HEK293 (cell line): ENCODE measurements at regions of chr1 and their contacts with region 1.

Region 1: GRCh38 chr1:153946622-153947241 is at the start of gene DENND4B:
- H3K4me3 ChIP-seq: peak within 1 kb of the TSS; percentile 74
- H3K27ac ChIP-seq: peak within 1 kb of the TSS; percentile 91
- H3K4me1 ChIP-seq: no peaks in the 10 kb centered on the region
- CTCF ChIP-seq: peak; percentile 92

Region 2: DNA sequence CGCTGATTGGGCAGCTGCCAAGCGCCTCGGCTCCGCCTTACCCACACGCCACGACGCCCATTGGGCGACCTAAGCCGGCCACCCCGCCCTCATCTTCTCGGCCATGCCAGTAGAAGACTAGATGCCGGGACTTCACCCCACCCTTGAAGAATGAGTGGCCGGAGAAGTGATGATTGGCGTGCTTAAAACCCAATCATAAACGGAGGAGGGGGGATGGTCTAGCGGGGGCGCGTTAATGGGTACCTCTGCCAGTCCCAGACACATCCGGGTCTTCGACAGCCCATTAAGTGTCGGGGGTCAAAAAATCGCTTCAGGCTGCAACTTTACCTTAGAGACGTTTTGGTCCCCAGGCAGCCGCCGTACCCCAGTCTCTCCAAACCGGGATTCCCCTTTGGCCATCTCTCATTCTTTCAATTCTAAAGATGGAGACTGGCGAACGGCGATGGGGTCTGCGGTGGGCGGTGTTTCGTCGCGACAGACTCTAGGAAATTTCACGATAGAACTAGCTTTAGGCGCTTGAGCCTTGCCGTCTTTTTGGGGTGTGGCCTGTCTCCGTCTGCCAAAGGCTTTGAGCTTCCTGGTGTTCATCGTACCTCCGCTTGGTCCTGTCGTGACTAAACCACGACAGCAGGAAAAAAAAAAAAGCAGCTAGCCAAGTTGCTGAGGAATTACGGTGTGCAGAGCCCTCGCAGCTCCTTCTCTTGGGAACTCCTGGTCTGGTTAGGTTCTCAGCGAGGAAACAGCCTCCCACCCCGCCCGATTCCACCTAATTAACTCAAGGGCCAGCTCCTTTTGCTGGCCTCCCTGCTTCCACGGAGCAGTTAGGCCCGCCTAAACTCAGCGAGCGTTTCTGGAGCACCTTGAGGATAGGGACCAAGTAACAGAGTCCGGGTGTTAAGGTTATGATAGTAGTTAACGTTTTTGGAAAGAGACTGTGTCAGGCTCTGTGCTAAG is 23.5 kb before region 1 on chr1 and contains the start of gene GATAD2B:
- CTCF ChIA-PET with region 1: interaction called, 13 read pairs
- POLR2A ChIA-PET with region 1: interaction called, 31 read pairs
- H3K4me3 ChIP-seq: peak within 1 kb of the TSS; percentile 95
- H3K27ac ChIP-seq: peak within 1 kb of the TSS; percentile 78
- H3K4me1 ChIP-seq: peaks cover 4% of the 10 kb centered on the region
- CTCF ChIP-seq: no peak

Region 3: GRCh38 chr1:153928791-153929341 is 17.9 kb before region 1 on chr1:
- CTCF ChIA-PET with region 1: interaction called, 13 read pairs
- POLR2A ChIA-PET with region 1: interaction called, 31 read pairs
- H3K4me3 ChIP-seq: no peak overlapping the region
- H3K27ac ChIP-seq: no peak overlapping the region
- H3K4me1 ChIP-seq: no peaks in the 10 kb centered on the region
- CTCF ChIP-seq: no peak

Region 4: GRCh38 chr1:153958111-153958960 is 11.6 kb after region 1 on chr1 and contains the start of gene CRTC2:
- CTCF ChIA-PET with region 1: interaction called, 7 read pairs
- POLR2A ChIA-PET with region 1: interaction called, 22 read pairs
- H3K4me3 ChIP-seq: peak within 1 kb of the TSS; percentile 89
- H3K27ac ChIP-seq: peak within 1 kb of the TSS; percentile 90
- H3K4me1 ChIP-seq: peaks cover 13% of the 10 kb centered on the region; the same call in 1 of the 2 replicates
- CTCF ChIP-seq: peak; percentile 75; the same call in 1 of the 2 replicates

Region 5: DNA sequence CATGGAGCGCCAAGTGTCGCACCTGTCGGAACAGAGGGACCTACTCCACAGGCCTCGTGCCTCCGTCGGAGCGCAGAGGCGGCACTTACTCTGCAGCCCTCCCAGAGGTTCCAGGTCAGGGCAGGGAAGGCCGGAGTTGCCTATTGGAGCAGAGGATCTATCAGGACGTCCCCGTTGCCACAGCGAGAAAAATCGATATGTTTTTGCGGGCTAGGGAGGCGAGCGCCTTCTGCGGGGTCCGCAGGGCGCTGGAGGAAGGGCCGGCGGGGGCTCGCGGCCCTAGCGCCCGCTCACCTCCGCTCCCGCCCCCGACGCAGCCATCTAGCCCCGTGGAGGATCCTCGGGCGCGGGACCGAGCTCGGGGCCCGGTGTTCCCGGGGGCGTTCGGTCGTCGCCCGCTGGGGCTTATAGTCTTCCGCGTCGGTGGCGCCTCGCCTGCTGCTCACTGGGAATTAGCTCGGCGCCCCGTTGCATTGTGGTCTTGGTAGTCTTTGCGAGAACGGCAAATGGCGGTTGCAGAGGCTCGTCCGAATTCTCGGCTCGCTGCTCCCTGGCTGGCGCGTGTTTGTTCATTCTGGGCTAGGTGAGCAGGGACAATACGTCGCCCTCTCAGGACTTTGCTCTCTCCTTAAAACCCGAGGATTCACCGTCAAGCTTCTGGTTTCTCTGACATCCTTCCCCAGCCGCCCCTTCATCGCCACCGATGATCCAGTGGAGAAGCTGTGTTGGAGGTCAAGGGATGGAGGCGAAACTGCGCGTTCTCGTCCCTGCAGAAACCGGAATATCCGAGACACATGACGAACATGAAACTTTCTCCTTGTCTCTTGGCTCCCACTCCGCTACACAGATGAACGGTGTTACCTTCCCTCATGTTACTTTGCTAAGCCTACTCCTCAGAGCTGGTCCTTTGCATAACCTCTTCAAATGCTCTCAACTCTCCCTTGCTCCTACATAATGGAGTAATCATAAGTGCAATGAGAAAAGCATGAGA is 30.8 kb after region 1 on chr1 and contains the start of gene JTB:
- CTCF ChIA-PET with region 1: interaction called, 10 read pairs
- POLR2A ChIA-PET with region 1: interaction called, 21 read pairs
- H3K4me3 ChIP-seq: peak within 1 kb of the TSS; percentile 90
- H3K27ac ChIP-seq: peak within 1 kb of the TSS; percentile 88
- H3K4me1 ChIP-seq: no peaks in the 10 kb centered on the region
- CTCF ChIP-seq: peak; percentile 6; the same call in 1 of the 2 replicates